Heart left ventricle (tissue), 16 donors: ENCODE measurements at regions of chrX and their contacts with region 1.

Region 1: DNA sequence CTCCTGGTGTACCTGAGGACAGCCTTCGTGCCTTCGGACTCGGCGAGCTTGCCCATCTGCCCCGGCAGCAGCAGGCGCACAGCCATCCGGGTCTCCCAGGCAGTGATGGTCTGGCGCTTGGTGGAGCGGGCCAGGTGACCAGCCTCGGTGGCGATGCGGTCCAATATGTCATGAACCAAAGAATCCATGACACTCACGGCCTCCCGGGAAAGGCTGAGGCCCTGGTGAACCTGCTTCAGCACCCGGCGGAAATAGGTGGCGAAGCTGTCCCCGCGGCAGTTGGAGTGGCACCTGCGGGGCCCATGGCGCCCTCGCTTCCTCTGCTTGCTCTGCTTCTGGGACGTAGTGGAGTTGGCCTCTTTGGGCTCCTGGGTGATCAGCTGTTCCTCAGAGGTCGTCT is 350 bp downstream of the H2BW1 start:
- DNase-seq: no peak
- ATAC-seq: no peak
- H3K4me3 ChIP-seq: no peak overlapping the region
- H3K27ac ChIP-seq: no peak overlapping the region
- H3K4me1 ChIP-seq: no peaks in the 10 kb centered on the region
- H3K27me3 ChIP-seq: peaks cover 0 to 15% (median 0%) of the 10 kb centered on the region in 9 donors
- CTCF ChIP-seq: no peak
- POLR2A ChIP-seq: no peak

Region 2: GRCh38 chrX:104126856-104127255 is 113.7 kb after region 1 on chrX:
- intact Hi-C with region 1: loop called in 1 of 10 experiments (anchors 5 kb)
- DNase-seq: no peak
- ATAC-seq: no peak
- H3K4me3 ChIP-seq: no peak overlapping the region
- H3K27ac ChIP-seq: no peak overlapping the region
- H3K4me1 ChIP-seq: peaks cover 0 to 4% (median 0%) of the 10 kb centered on the region in 12 donors
- H3K27me3 ChIP-seq: peaks cover 0 to 10% (median 0%) of the 10 kb centered on the region in 9 donors
- CTCF ChIP-seq: no peak
- POLR2A ChIP-seq: no peak